MCF 10A (cell line): ENCODE measurements at regions of chr1 and their contacts with region 1.

Region 1: DNA sequence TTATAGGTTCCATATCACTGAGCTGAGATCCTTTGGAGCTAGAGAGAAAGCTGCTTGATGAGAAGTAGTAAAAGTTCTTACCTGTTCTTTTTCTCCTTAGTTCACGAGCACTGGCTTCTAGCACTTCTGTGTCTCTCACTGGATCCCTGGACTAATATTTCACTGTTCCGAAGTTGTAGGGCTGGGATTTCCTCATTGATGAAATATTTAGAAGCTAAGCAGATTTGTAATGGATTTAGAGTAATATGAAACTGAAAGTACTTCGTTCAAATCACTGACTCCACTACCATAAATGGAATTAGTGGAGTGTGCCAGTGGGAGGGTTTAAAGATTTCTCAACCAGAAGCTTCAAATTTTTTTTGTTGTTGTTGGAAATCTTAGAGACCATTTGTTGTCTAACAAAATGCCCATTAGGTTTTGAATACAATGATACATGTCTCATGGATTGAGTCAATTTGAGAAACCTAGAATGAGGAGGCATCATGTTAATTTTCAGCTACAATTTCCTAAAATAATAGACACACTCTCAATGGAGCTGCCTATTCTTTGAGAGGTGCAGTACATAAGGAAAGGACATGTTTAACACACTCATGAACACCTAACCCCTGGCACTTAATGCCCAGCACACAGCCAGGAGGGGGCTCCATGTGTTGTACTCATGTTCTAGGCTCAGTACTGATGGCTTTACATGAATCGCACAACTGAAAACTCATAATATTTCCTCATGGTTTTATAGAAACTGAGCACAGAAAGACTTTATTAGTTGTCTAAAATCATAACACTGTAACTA is at the start of gene GBP1:
- DNase-seq: peak; percentile 79
- H3K4me3 Mint-ChIP-seq: peak within 1 kb of the TSS; percentile 76
- H3K27ac Mint-ChIP-seq: peak within 1 kb of the TSS; percentile 91
- H3K4me1 Mint-ChIP-seq: peaks cover 13% of the 10 kb centered on the region
- H3K27me3 Mint-ChIP-seq: no peaks in the 10 kb centered on the region
- CTCF ChIP-seq: no peak
- total RNA-seq, gene GBP1: 10.4 and 10.6 TPM in 2 replicates

Region 2: GRCh38 chr1:89022167-89022959 is 42.9 kb before region 1 on chr1 and contains the start of gene GBP3:
- CTCF ChIA-PET with region 1: interaction called, 8 read pairs
- POLR2A ChIA-PET with region 1: interaction called, 48 read pairs
- intact Hi-C with region 1: loop called (anchors 2 kb)
- DNase-seq: peak; percentile 59
- H3K4me3 Mint-ChIP-seq: peak within 1 kb of the TSS; percentile 80
- H3K27ac Mint-ChIP-seq: peak within 1 kb of the TSS; percentile 86
- H3K4me1 Mint-ChIP-seq: peaks cover 15% of the 10 kb centered on the region
- H3K27me3 Mint-ChIP-seq: no peaks in the 10 kb centered on the region
- CTCF ChIP-seq: no peak
- total RNA-seq, gene GBP3: 19.4 and 20.1 TPM in 2 replicates

Region 3: GRCh38 chr1:89104147-89104546 is 38.9 kb after region 1 on chr1:
- CTCF ChIA-PET with region 1: no interaction called
- POLR2A ChIA-PET with region 1: no interaction called
- intact Hi-C with region 1: no loop called
- DNase-seq: no peak
- H3K4me3 Mint-ChIP-seq: no peak overlapping the region
- H3K27ac Mint-ChIP-seq: no peak overlapping the region
- H3K4me1 Mint-ChIP-seq: no peaks in the 10 kb centered on the region
- H3K27me3 Mint-ChIP-seq: no peaks in the 10 kb centered on the region
- CTCF ChIP-seq: no peak

Region 4: GRCh38 chr1:89198081-89198480 is 132.8 kb after region 1 on chr1:
- CTCF ChIA-PET with region 1: no interaction called
- POLR2A ChIA-PET with region 1: no interaction called
- intact Hi-C with region 1: no loop called
- DNase-seq: no peak
- H3K4me3 Mint-ChIP-seq: no peak overlapping the region
- H3K27ac Mint-ChIP-seq: no peak overlapping the region
- H3K4me1 Mint-ChIP-seq: no peaks in the 10 kb centered on the region
- H3K27me3 Mint-ChIP-seq: no peaks in the 10 kb centered on the region
- CTCF ChIP-seq: no peak